HEK293T (cell line): ENCODE measurements at regions of chr5 and their contacts with region 1.

Region 1: GRCh38 chr5:145027270-145027669 is 807.9 kb downstream of the PRELID2 start:
- DNase-seq: no peak

Region 2: DNA sequence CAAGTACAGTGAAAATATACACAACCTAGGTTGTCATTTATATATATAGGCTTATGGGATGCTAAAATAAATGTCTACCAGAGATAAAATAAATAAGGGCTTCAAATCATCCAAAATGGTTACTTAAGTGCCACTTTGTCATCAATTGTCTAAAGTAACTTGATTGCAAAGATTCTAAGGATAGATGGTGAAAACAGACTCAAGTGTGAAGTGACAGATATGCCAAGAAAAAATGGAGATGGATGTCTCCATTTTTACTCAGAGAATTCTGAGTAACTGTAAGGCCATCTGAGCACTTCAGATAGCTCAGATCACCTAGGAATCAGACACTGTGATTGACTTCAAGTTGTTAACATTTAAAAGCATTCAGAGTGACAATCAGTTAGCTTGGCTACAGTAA is 16.4 kb before region 1 on chr5:
- CTCF ChIA-PET with region 1: interaction called, 12 read pairs
- POLR2A ChIA-PET with region 1: no interaction called
- DNase-seq: no peak

Region 3: GRCh38 chr5:145072889-145073288 is 45.6 kb after region 1 on chr5:
- CTCF ChIA-PET with region 1: no interaction called
- POLR2A ChIA-PET with region 1: no interaction called
- DNase-seq: no peak